ENCODE measurements at regions of chr6 and their contacts with region 1.

Region 1: DNA sequence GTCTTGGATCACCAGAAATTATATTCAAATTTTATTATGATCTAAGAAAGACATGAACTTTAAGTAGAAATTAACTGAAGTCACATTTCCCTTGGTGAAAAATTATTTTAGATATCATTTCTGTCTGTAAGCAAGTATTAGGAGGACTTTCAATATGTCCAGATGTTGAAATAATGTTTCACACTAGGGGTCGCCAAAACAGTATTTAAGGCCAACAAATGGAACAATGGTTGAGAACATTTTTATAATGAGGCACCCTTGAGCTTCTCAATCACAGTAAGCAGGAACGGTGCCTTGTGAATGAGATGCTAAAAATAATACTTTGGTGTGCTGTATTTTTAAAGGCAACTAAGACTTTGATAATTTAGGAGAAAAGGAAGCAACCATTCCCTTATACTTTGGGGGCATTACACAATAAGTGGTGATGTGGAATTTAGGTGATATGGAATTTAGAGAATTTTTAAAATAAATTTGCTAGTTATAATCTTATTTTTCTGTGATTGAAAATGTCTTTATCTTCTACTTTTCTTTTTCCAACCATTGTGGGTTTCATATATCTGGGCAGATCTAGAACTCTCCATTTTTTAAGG is 9.6 kb upstream of the SF3B5 start:
- ATAC-seq: peak; percentile 50 to 80 (median 69)
- H3K4me3 ChIP-seq: no peak overlapping the region
- H3K27ac ChIP-seq: no peak overlapping the region
- H3K4me1 ChIP-seq: no peaks in the 10 kb centered on the region

Region 2: GRCh38 chr6:144215932-144216667 is 111.1 kb after region 1 on chr6:
- in situ Hi-C with region 1: loop called in 2 of 9 experiments (anchors 10 kb)
- ATAC-seq: peak; percentile 85 to 90 (median 88)
- H3K4me3 ChIP-seq: peak overlapping the region; percentile 51 to 66 (median 57)
- H3K27ac ChIP-seq: peak overlapping the region; percentile 77 to 93
- H3K4me1 ChIP-seq: peaks cover 0 to 8% of the 10 kb centered on the region in 2 donors

Region 3: GRCh38 chr6:144482142-144482541 is 377.1 kb after region 1 on chr6:
- in situ Hi-C with region 1: loop called in 6 of 9 experiments (anchors 10 to 25 kb)
- ATAC-seq: peak in 7 of 8 experiments; percentile 38 to 74 (median 65)
- H3K4me3 ChIP-seq: no peak overlapping the region
- H3K27ac ChIP-seq: no peak overlapping the region
- H3K4me1 ChIP-seq: no peaks in the 10 kb centered on the region